ENCODE measurements at regions of chr13 and their contacts with region 1.

Region 1: DNA sequence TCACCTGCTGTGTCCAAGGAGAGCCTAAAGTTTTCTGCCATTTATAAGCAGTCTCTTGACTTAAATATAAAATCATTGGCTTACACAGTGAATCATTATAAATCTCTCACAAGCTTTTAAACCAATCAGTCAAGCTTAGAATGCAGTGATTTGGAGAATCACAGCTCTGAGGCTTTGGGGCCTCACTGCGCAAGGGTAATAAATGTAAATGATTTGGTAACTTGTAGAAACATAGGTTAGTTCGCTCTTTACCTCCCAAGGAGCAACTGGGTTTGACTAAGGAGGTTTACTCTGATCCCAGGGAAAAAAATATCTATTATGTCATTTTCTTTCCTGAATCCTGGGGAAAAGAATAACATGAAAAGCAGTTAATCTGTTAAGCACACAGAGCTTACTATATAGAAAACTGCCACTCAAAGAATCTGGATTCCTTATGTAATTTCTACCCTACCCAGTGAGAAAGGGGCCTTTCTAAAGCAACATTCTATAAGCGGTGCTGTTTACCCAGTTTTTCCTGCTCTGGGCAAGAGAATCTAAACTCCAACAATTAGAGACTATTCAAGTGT is 128.2 kb downstream of the MZT1 start:
- DNase-seq: no peak
- ATAC-seq: no peak
- H3K4me3 ChIP-seq: no peak overlapping the region
- H3K4me3 Mint-ChIP-seq: no peak overlapping the region
- H3K27ac ChIP-seq: no peak overlapping the region
- H3K27ac Mint-ChIP-seq: no peak overlapping the region
- H3K4me1 ChIP-seq: no peaks in the 10 kb centered on the region
- H3K4me1 Mint-ChIP-seq: no peaks in the 10 kb centered on the region
- H3K27me3 ChIP-seq: no peaks in the 10 kb centered on the region
- H3K27me3 Mint-ChIP-seq: no peaks in the 10 kb centered on the region
- CTCF ChIP-seq: no peak

Region 2: GRCh38 chr13:72570019-72570418 is 29.2 kb before region 1 on chr13:
- CTCF ChIA-PET with region 1: no interaction called
- POLR2A ChIA-PET with region 1: no interaction called
- intact Hi-C with region 1: loop called in 1 of 2 experiments (anchors 1 kb)
- DNase-seq: no peak
- ATAC-seq: no peak
- H3K4me3 ChIP-seq: no peak overlapping the region
- H3K4me3 Mint-ChIP-seq: no peak overlapping the region
- H3K27ac ChIP-seq: no peak overlapping the region
- H3K27ac Mint-ChIP-seq: no peak overlapping the region
- H3K4me1 ChIP-seq: no peaks in the 10 kb centered on the region
- H3K4me1 Mint-ChIP-seq: no peaks in the 10 kb centered on the region
- H3K27me3 ChIP-seq: no peaks in the 10 kb centered on the region
- H3K27me3 Mint-ChIP-seq: peaks cover 3% of the 10 kb centered on the region
- CTCF ChIP-seq: no peak

Region 3: DNA sequence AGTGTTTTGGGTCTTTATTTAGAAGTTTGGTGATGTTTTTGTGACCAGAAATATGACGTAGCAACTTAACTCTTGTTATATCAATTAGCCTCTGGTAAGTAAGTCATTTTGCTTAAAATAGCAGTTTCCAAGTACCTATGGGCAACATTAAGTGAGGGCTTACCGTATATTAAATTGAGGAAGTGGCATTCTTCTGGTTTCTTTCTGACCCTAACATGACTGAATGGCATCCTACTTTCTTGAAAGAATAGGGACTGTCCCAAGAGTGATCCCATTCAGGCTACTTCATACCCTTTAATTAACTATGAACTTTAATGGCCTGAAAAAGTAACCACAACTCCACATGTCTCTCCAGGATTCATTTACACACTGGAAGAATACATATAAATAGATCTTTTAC is 21.6 kb after region 1 on chr13:
- CTCF ChIA-PET with region 1: no interaction called
- POLR2A ChIA-PET with region 1: no interaction called
- intact Hi-C with region 1: no loop called
- DNase-seq: no peak
- ATAC-seq: no peak
- H3K4me3 ChIP-seq: no peak overlapping the region
- H3K4me3 Mint-ChIP-seq: no peak overlapping the region
- H3K27ac ChIP-seq: no peak overlapping the region
- H3K27ac Mint-ChIP-seq: no peak overlapping the region
- H3K4me1 ChIP-seq: no peaks in the 10 kb centered on the region
- H3K4me1 Mint-ChIP-seq: no peaks in the 10 kb centered on the region
- H3K27me3 ChIP-seq: peaks cover 0 to 3% of the 10 kb centered on the region in 2 experiments
- H3K27me3 Mint-ChIP-seq: peaks cover 3% of the 10 kb centered on the region
- CTCF ChIP-seq: no peak